ENCODE measurements at regions of chr15 and their contacts with region 1.

Region 1: DNA sequence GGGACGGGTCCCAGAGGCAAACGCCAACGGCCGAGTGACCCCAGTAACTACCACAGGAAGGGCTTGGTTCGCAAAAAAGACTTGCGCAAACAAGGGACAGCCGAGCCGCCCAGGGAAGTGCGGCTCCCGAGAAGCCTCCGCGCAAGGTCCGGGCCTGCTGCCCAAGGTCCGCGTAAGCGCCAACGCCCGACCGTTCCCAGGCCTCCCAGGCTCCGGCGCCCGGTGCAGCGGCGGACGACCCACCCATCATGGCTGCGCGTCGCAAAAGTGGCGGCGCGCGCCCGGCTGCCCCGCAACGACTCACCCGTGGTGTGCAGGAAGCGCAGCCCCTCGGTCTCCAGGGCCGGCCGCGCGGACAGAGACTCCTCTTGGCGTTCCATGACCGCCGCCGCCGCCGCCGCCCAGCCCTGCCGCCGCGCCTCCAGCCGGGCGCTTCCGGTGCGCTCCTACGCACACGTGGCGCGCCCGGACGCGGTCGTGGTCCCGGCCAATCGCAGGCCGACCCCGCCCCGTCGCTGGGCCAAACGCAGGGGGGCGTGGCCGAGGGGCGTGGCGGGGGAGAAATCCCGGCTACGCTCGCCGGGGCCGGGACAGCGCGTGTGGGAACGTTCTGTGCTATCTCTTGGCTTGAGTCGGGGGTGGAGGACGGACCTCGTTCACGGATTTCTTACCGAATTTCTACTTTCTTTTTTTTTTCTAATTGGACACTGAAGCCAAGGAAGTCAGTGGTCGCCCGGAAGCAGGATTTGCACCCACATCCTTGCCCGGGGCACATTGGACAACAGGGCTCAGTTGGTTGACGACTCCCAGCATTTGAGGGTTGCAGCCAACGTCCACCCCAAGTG is at the start of gene SELENOS:
- DNase-seq: peak; percentile 69
- H3K4me3 ChIP-seq: peak within 1 kb of the TSS; percentile 62
- H3K27ac ChIP-seq: peak within 1 kb of the TSS; percentile 75
- H3K27me3 ChIP-seq: no peaks in the 10 kb centered on the region
- CTCF ChIP-seq: no peak
- polyA plus RNA-seq, gene SELENOS: 79.9 and 100 TPM in 2 replicates

Region 2: DNA sequence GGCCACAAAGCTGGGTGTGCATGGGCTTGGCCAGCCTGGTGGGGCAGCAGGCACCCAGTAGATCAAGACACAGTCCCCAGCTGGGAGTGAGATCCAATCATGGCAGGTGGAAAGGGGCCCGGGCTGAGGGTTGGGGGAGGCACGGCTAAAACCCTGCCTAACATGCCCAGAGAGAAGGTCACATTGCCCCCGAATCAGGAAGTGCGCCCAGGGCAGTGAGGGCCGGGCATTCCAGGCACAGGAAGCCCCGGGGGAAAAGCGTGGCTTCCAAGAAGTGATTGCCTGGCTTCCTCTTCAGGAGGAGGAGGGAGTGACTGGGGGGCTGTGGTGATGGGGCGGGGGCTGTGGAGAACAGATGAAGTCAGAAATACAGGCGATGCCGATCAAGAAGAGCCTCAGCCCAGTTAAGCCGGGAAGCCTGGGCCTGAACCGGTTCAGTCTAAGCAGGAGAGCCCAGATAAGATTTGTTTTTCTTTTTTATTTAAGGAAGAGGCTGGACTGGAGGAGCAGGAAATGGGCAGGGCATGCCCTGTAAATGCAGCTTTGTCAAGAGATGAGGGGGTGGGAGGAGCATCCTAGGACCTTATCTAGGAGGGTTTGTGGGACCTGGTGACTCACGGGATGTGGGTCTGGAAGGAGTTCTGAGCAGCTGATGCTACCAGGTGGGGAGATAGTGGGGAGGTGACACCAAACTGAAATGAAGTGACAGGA is 109.4 kb before region 1 on chr15:
- CTCF ChIA-PET with region 1: no interaction called
- POLR2A ChIA-PET with region 1: interaction called, 15 read pairs
- DNase-seq: peak; percentile 61
- H3K4me3 ChIP-seq: no peak overlapping the region
- H3K27ac ChIP-seq: peak overlapping the region; percentile 86
- H3K27me3 ChIP-seq: no peaks in the 10 kb centered on the region
- CTCF ChIP-seq: no peak

Region 3: DNA sequence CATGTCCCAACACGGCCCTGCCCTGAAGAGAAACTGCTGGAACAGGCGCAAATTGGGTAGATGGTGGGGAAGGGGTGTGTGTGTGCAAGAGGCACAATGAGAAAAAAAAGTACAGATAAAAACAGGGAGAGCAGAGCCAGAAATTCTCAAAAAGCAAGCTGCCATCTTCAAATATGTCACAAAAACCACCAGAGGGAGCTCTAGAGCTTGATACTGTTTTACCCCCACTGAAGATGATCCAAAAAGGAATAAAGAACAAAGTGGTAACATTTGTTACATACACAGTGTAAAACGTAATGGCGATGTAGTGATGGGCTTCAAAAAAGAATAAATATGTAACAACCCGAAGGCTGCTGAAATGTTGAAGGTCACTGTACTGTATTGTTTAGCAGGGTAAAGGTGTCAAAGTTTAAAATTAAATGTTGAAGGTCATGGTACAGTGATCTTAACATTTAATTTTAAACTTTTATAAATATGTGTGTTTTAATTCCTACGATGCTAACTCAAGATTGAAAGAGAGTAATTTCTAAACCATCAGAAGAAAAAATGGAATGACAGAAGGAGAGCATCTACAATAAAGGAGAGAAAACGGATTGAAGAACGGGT is 11.8 kb after region 1 on chr15:
- CTCF ChIA-PET with region 1: interaction called, 15 read pairs
- POLR2A ChIA-PET with region 1: no interaction called
- DNase-seq: no peak
- H3K4me3 ChIP-seq: no peak overlapping the region
- H3K27ac ChIP-seq: no peak overlapping the region
- H3K27me3 ChIP-seq: no peaks in the 10 kb centered on the region
- CTCF ChIP-seq: peak; percentile 60

Region 4: DNA sequence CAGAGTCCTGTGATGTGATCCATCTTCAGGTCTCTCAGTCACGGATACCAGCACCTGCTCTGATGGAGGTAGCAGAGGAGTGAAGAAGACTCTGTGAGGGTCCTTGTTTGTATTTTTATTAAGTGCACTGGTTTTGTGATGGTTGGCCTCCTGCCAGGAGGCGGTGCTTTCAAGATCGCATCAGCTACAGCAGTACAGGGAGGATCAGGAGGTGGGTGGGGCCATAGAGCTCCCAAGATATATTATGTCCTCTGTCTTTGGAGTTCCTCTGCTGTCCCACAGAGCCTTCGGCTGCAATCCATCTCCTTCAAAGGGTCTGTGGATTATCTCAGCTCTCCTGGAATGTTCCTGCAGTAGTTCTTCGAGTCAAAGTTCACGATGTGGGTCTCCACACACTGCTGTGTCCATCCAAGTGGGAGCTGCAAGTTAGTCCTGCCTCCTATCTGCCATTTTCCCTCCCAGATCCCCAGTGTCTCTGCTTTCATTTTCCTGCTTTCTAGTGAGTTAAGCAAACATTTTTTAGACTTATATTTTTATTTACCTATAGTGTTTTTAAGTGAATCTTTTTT is 320.2 kb after region 1 on chr15:
- CTCF ChIA-PET with region 1: no interaction called
- POLR2A ChIA-PET with region 1: no interaction called
- DNase-seq: no peak
- H3K4me3 ChIP-seq: no peak overlapping the region
- H3K27ac ChIP-seq: no peak overlapping the region
- H3K27me3 ChIP-seq: peaks cover 3% of the 10 kb centered on the region
- CTCF ChIP-seq: no peak

Measured in AG04450 (cell line).